GM12878 (cell line): ENCODE measurements at regions of chr20 and their contacts with region 1.

Region 1: GRCh38 chr20:45052698-45053429 is 48.1 kb downstream of the KCNS1 start:
- DNase-seq: peak; percentile 55
- ATAC-seq: peak; percentile 78
- H3K4me3 ChIP-seq: no peak overlapping the region; the same call in 1 of the 2 replicates
- H3K27ac ChIP-seq: peak overlapping the region; percentile 39
- H3K4me1 ChIP-seq: peaks cover 48% of the 10 kb centered on the region
- H3K27me3 ChIP-seq: no peaks in the 10 kb centered on the region
- CTCF ChIP-seq: no peak
- EP300 ChIP-seq: peak in 1 of 2 experiments; percentile 26; a peak in 2 of 4 replicates
- POLR2A ChIP-seq: no peak
- RAD21 ChIP-seq: no peak

Region 2: DNA sequence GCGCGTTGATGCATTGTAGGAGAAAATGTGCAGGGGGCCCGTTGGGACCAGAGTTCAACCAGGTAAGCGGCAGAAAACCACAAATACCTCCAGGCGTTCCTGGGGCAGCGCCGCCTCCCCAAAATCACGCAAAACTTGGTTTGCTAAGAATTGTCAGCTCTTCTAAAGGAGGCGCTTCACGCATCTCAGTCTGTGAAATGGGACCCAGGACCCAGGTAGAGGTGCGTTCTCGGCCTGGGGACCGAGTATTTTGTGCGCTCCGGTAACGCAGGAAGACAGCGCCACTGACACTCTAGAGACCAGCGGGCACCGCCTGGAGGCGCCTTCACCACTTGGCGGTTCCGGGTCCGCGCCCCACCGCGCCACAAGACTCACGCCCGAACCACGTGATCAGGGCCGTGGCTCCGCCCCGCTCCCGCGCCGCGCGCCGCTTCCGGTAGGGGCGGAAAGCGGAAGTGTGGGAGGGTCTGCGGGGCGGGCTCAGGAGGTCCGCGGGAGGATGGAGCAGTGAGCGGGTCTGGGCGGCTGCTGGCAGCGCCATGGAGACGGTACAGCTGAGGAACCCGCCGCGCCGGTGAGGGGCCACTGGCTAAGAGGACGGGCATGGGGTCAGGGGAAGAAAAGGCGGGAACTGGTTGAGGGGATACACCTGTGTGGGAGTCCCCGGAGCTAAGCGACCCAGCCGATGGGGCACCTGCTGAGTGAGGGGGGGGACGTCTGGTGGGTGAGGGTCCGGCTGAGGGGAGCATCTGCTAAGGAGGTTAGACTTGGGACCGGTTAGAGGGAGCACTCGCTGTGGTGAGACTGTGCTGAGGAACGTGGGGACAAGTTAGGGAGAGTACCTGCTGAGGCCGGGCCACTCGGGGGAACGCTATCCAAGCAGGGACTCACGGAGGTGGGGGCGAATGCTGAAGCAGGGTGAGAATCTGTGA is 86.6 kb before region 1 on chr20 and contains the start of gene STK4:
- CTCF ChIA-PET with region 1: interaction called, 8 read pairs
- POLR2A ChIA-PET with region 1: interaction called, 5 read pairs
- RAD21 ChIA-PET with region 1: interaction called, 10 read pairs
- SMC1A ChIA-PET with region 1: interaction called, 12 read pairs
- in situ Hi-C with region 1: no loop called
- intact Hi-C with region 1: no loop called
- DNase-seq: peak; percentile 90
- ATAC-seq: peak; percentile 79
- H3K4me3 ChIP-seq: peak within 1 kb of the TSS; percentile 95
- H3K27ac ChIP-seq: peak within 1 kb of the TSS; percentile 95
- H3K4me1 ChIP-seq: peaks cover 13% of the 10 kb centered on the region
- H3K27me3 ChIP-seq: no peaks in the 10 kb centered on the region
- CTCF ChIP-seq: peak; percentile 50 to 74 (median 59)
- EP300 ChIP-seq: no peak; a peak in 1 of 4 replicates
- POLR2A ChIP-seq: peak; percentile 95
- RAD21 ChIP-seq: peak; percentile 45
- polyA plus RNA-seq, gene STK4: 24.0 to 51.4 TPM

Region 3: DNA sequence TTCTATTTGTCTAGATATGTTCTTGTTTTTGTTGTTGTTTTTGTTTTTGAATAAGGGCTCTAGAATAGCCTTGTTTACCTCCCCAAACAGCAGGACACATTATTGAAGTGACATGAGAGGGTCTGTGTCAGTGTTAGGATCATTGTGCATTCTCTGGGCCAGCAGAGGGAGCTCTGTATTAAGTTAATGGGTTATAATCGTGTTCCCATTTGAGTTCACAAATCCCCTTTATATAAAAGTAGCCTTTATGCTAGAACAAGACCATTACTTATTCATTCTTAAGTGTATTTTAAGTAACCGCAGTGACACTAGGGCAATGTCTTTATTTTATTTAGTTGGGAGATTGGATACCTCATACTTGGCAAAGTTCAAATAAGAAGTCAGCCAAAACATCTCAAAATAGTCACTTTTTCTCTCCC is 41.7 kb before region 1 on chr20:
- CTCF ChIA-PET with region 1: interaction called, 14 read pairs
- POLR2A ChIA-PET with region 1: no interaction called
- RAD21 ChIA-PET with region 1: no interaction called
- SMC1A ChIA-PET with region 1: interaction called, 13 read pairs
- in situ Hi-C with region 1: no loop called
- intact Hi-C with region 1: no loop called
- DNase-seq: no peak
- ATAC-seq: peak; percentile 79
- H3K4me3 ChIP-seq: no peak overlapping the region
- H3K27ac ChIP-seq: no peak overlapping the region
- H3K4me1 ChIP-seq: no peaks in the 10 kb centered on the region
- H3K27me3 ChIP-seq: no peaks in the 10 kb centered on the region
- CTCF ChIP-seq: peak; percentile 55 to 64 (median 61)
- EP300 ChIP-seq: no peak
- POLR2A ChIP-seq: no peak
- RAD21 ChIP-seq: peak; percentile 67

Region 4: GRCh38 chr20:45020236-45020886 is 32.5 kb before region 1 on chr20:
- CTCF ChIA-PET with region 1: no interaction called
- POLR2A ChIA-PET with region 1: interaction called, 4 read pairs
- RAD21 ChIA-PET with region 1: no interaction called
- SMC1A ChIA-PET with region 1: interaction called, 13 read pairs
- in situ Hi-C with region 1: no loop called
- intact Hi-C with region 1: no loop called
- DNase-seq: no peak
- ATAC-seq: no peak
- H3K4me3 ChIP-seq: no peak overlapping the region
- H3K27ac ChIP-seq: no peak overlapping the region
- H3K4me1 ChIP-seq: no peaks in the 10 kb centered on the region
- H3K27me3 ChIP-seq: no peaks in the 10 kb centered on the region
- CTCF ChIP-seq: no peak
- EP300 ChIP-seq: no peak
- POLR2A ChIP-seq: no peak
- RAD21 ChIP-seq: no peak

Region 5: DNA sequence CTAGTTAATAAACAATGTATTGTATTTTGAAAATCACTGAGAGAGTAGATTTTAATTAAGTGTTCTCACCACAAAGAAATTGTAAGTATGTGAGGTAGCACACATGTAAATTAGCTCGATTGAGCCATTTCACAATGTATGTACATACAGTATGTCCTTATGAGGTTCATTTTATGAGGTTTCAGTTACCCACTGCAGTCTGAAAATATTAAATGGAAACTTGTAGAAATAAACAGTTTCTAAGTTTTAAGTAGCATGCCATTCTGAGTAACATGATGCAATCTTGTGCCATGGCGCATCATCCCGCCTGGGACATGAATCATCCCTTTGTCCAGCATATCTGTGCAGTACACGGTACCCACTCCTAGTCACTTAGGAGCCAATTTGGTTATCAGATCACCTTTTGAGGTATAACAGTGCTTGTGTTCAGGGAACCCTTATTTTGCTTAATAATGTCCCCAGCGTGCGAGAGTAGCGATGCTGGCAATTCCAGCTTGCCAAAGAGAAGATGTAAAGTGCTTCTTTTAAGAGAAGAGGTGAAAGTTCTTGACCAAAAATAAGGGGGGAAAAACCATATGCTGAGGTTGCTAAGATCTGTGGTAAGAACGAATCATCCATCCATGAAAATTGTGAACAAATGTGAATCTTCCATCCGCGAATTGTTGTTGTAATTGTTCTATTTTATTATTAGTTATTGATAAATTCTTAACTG is 16.7 kb before region 1 on chr20:
- CTCF ChIA-PET with region 1: interaction called, 20 read pairs
- POLR2A ChIA-PET with region 1: interaction called, 6 read pairs
- RAD21 ChIA-PET with region 1: interaction called, 11 read pairs
- SMC1A ChIA-PET with region 1: interaction called, 16 read pairs
- in situ Hi-C with region 1: no loop called
- intact Hi-C with region 1: no loop called
- DNase-seq: no peak
- ATAC-seq: no peak
- H3K4me3 ChIP-seq: no peak overlapping the region
- H3K27ac ChIP-seq: no peak overlapping the region
- H3K4me1 ChIP-seq: peaks cover 9% of the 10 kb centered on the region
- H3K27me3 ChIP-seq: no peaks in the 10 kb centered on the region
- CTCF ChIP-seq: no peak
- EP300 ChIP-seq: no peak
- POLR2A ChIP-seq: no peak
- RAD21 ChIP-seq: no peak

Region 6: DNA sequence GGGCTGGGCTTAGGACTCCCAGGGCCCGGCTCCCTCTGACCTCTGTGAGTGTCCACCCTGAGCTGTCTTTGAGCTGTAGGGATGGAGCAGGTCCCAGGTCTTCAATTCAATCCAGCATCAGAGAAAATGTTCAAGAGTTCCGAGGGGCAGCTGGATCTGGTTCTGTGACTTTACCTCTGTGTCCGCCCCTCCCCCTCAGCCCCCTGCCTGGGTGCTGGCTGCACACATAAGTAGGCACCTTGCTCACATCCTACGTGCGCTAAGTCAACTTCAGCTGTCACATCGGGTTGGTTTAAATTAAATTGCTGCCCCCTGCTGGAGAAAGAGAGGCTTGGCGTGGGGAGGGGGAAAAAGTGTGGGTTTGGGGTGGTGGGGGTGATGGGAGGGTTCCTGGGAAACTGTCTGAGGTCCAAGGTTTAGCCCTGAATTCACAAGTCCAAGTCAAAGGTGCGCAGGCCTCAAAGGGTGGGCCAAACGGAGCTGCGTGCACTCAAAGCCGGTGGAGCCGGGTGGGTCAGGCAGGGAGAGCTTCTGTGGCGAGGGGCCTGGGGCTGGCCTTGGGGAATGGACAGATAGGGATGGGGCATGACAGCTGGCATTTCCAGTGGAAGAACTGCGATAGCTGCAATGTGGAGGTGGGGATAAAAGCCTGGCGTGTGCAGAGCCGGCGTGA is 59.1 kb after region 1 on chr20:
- CTCF ChIA-PET with region 1: interaction called, 16 read pairs
- POLR2A ChIA-PET with region 1: no interaction called
- RAD21 ChIA-PET with region 1: interaction called, 4 read pairs
- SMC1A ChIA-PET with region 1: interaction called, 14 read pairs
- in situ Hi-C with region 1: no loop called
- intact Hi-C with region 1: no loop called
- DNase-seq: no peak
- ATAC-seq: peak; percentile 38; the same call in 2 of the 3 replicates
- H3K4me3 ChIP-seq: no peak overlapping the region
- H3K27ac ChIP-seq: no peak overlapping the region
- H3K4me1 ChIP-seq: no peaks in the 10 kb centered on the region
- H3K27me3 ChIP-seq: no peaks in the 10 kb centered on the region; a peak in 1 of 4 replicates
- CTCF ChIP-seq: peak; percentile 29 to 39 (median 36); a peak in 5 of 6 replicates
- EP300 ChIP-seq: no peak
- POLR2A ChIP-seq: no peak
- RAD21 ChIP-seq: peak; percentile 27

Region 7: GRCh38 chr20:45293041-45294002 is 240.5 kb after region 1 on chr20:
- CTCF ChIA-PET with region 1: interaction called, 8 read pairs
- POLR2A ChIA-PET with region 1: no interaction called
- RAD21 ChIA-PET with region 1: interaction called, 6 read pairs
- SMC1A ChIA-PET with region 1: interaction called, 6 read pairs
- in situ Hi-C with region 1: no loop called
- intact Hi-C with region 1: loop called (anchors 5 kb)
- DNase-seq: no peak
- ATAC-seq: peak; percentile 93
- H3K4me3 ChIP-seq: peak overlapping the region; percentile 30; the same call in 1 of the 2 replicates
- H3K27ac ChIP-seq: no peak overlapping the region
- H3K4me1 ChIP-seq: no peaks in the 10 kb centered on the region
- H3K27me3 ChIP-seq: peaks cover 6 to 7% of the 10 kb centered on the region in 2 experiments; a peak in 3 of 4 replicates
- CTCF ChIP-seq: peak; percentile 83 to 96 (median 89)
- EP300 ChIP-seq: no peak
- POLR2A ChIP-seq: no peak
- RAD21 ChIP-seq: peak; percentile 25; the same call in 1 of the 2 replicates